ENCODE measurements at regions of chr14 and their contacts with region 1.

Region 1: GRCh38 chr14:93953263-93953662 is 23.1 kb downstream of the ASB2 start:
- DNase-seq: peak in 1 of 2 experiments; percentile 65
- H3K4me3 ChIP-seq: no peak overlapping the region
- H3K27ac ChIP-seq: no peak overlapping the region
- H3K4me1 ChIP-seq: peaks cover 0 to 12% (median 4%) of the 10 kb centered on the region in 4 experiments; a peak in 3 of 7 replicates
- H3K27me3 ChIP-seq: no peaks in the 10 kb centered on the region
- CTCF ChIP-seq: peak; percentile 44 to 59 (median 55)
- EP300 ChIP-seq: no peak
- POLR2A ChIP-seq: no peak
- RAD21 ChIP-seq: peak; percentile 38 to 54

Region 2: GRCh38 chr14:93984987-93985410 is 31.7 kb after region 1 on chr14:
- CTCF ChIA-PET with region 1: interaction called, 484 read pairs
- POLR2A ChIA-PET with region 1: no interaction called
- DNase-seq: peak in 1 of 2 experiments; percentile 65
- H3K4me3 ChIP-seq: no peak overlapping the region
- H3K27ac ChIP-seq: no peak overlapping the region
- H3K4me1 ChIP-seq: peaks cover 0 to 14% (median 8%) of the 10 kb centered on the region in 4 experiments; a peak in 4 of 7 replicates
- H3K27me3 ChIP-seq: no peaks in the 10 kb centered on the region; a peak in 1 of 7 replicates
- CTCF ChIP-seq: peak; percentile 50 to 64 (median 62)
- EP300 ChIP-seq: no peak
- POLR2A ChIP-seq: no peak
- RAD21 ChIP-seq: peak; percentile 11 to 50; a peak in 2 of 4 replicates